T-cell (primary cell): ENCODE measurements at regions of chr14 and their contacts with region 1.

Region 1: DNA sequence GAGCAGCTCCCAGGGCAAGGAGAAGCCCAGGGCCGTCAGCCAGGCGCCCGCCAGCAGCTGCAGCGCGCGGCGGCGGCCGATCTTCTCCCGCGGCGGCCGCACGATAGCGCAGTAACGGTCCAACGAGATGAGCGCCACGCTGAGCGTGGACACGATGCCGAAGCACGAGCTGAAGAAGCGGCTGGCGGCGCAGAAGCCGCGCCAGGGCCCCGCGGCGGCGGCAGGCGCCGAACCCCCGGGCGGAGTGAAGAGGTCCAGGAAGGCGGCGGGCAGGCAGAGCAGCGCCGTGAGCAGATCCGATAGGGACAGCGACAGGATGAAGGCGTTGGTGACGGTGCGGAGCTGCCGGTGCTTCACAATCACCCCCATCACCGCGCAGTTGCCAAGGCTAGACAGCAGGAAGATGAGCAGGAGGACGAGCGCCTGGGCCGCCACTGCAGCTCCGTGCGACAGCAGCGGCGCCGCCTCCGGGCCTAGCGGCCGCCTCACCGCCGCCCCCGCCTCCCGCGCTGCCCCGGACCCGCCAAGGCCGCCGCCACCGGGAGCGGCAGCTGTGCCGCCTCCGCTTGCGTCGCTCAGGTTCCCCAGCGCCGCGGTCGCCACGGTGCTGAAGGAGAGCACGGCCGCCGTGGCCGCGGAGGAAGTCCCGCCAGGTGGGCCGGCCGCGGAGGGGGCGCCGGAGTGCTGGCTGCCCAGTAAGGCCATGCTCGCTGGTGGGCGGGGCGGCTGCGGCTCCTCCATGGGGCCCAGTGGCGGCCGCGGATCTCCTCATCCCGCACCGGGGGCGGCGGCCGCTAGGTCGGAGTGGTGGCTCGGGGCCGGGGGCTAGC is 479 bp downstream of the GPR135 start:
- DNase-seq: peak in 34 of 35 experiments; percentile 20 to 68 (median 44)
- ATAC-seq: peak; percentile 75 to 79 (median 78)
- H3K4me3 ChIP-seq: peak overlapping the region; percentile 48 to 75
- H3K4me3 Mint-ChIP-seq: peak overlapping the region; percentile 84 to 88 (median 88)
- H3K27ac ChIP-seq: no peak overlapping the region
- H3K27ac Mint-ChIP-seq: peak overlapping the region in 1 of 2 donors; percentile 34
- H3K4me1 ChIP-seq: peaks cover 4 to 12% of the 10 kb centered on the region in 2 experiments
- H3K4me1 Mint-ChIP-seq: peaks cover 7 to 17% (median 14%) of the 10 kb centered on the region in 3 donors
- H3K27me3 ChIP-seq: peaks cover 0 to 3% of the 10 kb centered on the region in 2 experiments
- H3K27me3 Mint-ChIP-seq: peaks cover 6 to 8% of the 10 kb centered on the region in 2 donors

Region 2: GRCh38 chr14:59377991-59378601 is 86.6 kb before region 1 on chr14:
- CTCF ChIA-PET with region 1: no interaction called
- POLR2A ChIA-PET with region 1: no interaction called
- DNase-seq: no peak
- ATAC-seq: no peak
- H3K4me3 ChIP-seq: no peak overlapping the region
- H3K4me3 Mint-ChIP-seq: no peak overlapping the region
- H3K27ac ChIP-seq: no peak overlapping the region
- H3K27ac Mint-ChIP-seq: no peak overlapping the region
- H3K4me1 ChIP-seq: no peaks in the 10 kb centered on the region
- H3K4me1 Mint-ChIP-seq: no peaks in the 10 kb centered on the region
- H3K27me3 ChIP-seq: no peaks in the 10 kb centered on the region
- H3K27me3 Mint-ChIP-seq: peaks cover 3 to 5% of the 10 kb centered on the region in 2 donors

Region 3: DNA sequence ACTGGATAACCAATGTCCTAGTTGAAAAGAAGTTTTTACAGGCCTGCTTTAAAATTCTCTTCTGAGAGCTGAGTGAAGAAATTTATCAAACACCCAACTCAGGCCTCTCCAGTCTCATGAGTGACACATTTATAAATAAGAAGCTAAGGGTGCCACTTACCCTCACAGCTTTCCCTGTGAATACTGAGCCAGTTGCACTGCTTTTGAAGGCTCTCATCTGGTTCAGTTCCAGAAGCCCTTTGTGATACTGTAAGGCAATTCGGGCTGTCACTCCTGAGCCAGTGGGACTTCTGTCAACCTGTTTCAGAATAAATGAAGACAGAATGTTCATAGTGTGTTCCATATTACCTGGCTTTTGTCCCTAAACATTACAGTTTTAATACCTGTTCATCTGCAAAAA is 11.0 kb after region 1 on chr14:
- CTCF ChIA-PET with region 1: no interaction called
- POLR2A ChIA-PET with region 1: no interaction called
- DNase-seq: no peak
- ATAC-seq: no peak
- H3K4me3 ChIP-seq: no peak overlapping the region
- H3K4me3 Mint-ChIP-seq: no peak overlapping the region
- H3K27ac ChIP-seq: no peak overlapping the region
- H3K27ac Mint-ChIP-seq: no peak overlapping the region
- H3K4me1 ChIP-seq: no peaks in the 10 kb centered on the region
- H3K4me1 Mint-ChIP-seq: peaks cover 10 to 22% (median 21%) of the 10 kb centered on the region in 3 donors
- H3K27me3 ChIP-seq: no peaks in the 10 kb centered on the region
- H3K27me3 Mint-ChIP-seq: no peaks in the 10 kb centered on the region

Region 4: DNA sequence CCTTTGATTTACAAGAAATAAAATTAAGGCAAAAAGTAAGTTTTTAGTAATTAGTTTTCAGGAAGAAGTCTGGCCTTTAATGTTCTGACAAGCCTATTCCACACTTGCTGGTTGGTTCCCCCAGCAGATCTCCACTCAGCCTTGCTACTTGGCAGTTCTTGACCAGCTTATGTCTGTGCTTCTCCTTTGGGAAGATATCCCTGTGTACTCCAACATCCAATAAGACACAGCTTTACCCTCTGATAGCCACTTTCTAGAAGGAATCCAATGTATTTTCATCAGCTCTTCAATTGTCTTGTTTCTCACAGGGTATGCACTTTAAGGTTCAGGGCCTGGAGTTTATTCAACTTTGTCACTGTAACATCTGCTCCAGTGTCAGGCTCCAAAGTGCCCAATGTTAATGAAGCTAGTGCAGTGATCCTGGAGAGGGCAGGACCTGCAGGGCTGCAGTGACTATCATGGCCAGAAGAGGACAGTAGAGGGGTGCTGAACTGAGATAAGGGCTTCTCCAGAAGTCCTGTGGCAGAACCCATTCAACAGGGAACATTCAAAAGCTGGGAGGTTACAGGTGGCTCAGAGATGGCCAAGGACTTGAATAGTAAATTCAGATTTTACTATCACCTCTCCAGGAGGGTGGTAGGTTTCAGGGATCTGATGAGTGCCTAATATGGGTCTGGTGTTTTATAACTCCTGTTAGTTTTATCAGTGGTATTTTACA is 42.5 kb after region 1 on chr14:
- CTCF ChIA-PET with region 1: interaction called in 1 of 2 experiments, 14 read pairs
- POLR2A ChIA-PET with region 1: no interaction called
- DNase-seq: peak in 30 of 35 experiments; percentile 3 to 55 (median 30)
- ATAC-seq: peak in 3 of 4 experiments; percentile 70 to 73 (median 71)
- H3K4me3 ChIP-seq: no peak overlapping the region
- H3K4me3 Mint-ChIP-seq: no peak overlapping the region
- H3K27ac ChIP-seq: no peak overlapping the region
- H3K27ac Mint-ChIP-seq: no peak overlapping the region
- H3K4me1 ChIP-seq: peaks cover 0 to 2% of the 10 kb centered on the region in 2 experiments
- H3K4me1 Mint-ChIP-seq: peaks cover 13 to 16% (median 15%) of the 10 kb centered on the region in 3 donors
- H3K27me3 ChIP-seq: peaks cover 0 to 3% of the 10 kb centered on the region in 2 experiments
- H3K27me3 Mint-ChIP-seq: peaks cover 6 to 17% of the 10 kb centered on the region in 2 donors

Region 5: DNA sequence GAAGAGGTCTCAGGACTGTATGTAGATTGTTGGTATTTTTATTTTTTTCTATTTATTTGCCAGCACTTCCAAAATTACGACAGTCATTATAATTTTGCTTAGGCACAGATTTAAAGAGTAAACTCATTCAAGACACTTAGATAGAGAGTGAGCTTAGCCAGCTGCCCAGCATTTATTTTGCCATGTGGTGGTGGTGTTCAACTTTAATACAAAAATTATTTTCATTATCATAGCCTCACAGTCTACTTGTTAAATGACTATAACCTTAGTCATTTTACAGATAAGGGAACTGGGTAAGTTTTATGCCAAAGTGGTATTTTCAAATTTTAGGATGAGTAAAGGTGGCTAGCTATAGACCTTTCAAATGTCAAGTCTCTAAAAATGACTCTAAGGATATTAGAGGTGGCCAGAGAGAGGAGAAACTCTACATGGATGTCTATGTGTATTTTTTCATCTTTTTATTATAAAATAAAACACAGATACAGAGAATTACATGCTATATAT is 521.9 kb after region 1 on chr14:
- CTCF ChIA-PET with region 1: no interaction called
- POLR2A ChIA-PET with region 1: no interaction called
- DNase-seq: no peak
- ATAC-seq: no peak
- H3K4me3 ChIP-seq: no peak overlapping the region
- H3K4me3 Mint-ChIP-seq: no peak overlapping the region
- H3K27ac ChIP-seq: no peak overlapping the region
- H3K27ac Mint-ChIP-seq: no peak overlapping the region
- H3K4me1 ChIP-seq: no peaks in the 10 kb centered on the region
- H3K4me1 Mint-ChIP-seq: no peaks in the 10 kb centered on the region
- H3K27me3 ChIP-seq: peaks cover 0 to 8% of the 10 kb centered on the region in 2 experiments
- H3K27me3 Mint-ChIP-seq: peaks cover 6 to 8% of the 10 kb centered on the region in 2 donors